Left cardiac atrium (tissue), 4 donors: ENCODE measurements at regions of chr4 and their contacts with region 1.

Region 1: DNA sequence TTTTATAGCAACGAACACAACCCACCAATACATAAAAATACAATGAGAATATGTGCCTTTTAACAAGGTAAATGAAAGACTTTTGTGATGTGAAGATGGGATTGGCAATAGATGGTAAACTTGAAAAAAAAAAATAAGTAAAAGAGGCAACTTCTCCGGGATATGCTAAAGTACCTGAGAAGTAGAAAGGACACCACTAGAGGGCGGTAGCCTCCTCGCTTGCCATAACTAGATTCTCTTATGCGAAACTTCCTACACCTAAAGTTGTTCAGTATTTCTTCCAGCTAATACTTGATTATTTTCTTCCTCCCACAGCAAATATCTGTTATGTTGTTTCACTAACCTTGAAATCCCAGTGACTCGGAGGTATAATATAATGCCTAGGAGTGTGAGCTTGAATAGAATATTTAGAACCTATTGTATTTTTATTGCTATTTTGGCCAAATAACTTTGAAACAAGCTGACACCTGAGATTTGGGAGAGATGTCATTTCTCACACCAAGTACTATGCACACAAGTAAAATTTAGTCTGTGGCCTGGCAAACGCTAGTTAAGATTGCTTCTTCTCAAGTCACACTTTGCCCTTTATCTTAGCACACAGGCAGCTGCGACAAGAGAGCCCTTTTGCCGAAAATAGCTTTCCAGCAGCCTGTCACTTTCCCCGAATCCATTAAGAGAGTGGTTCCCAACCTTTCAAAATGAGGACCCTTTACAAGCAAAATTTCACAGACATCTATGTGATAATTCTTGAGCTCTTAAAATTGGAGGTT is 44.9 kb upstream of the PDLIM5 start:
- DNase-seq: peak; percentile 76
- ATAC-seq: peak; percentile 49 to 60

Region 2: GRCh38 chr4:94451695-94452475 is 45.0 kb after region 1 on chr4 and contains the start of gene PDLIM5:
- intact Hi-C with region 1: loop called (anchors 2 kb)
- DNase-seq: peak; percentile 92
- ATAC-seq: peak; percentile 95 to 97
- total RNA-seq, gene PDLIM5: 626 to 644 TPM